ENCODE measurements at regions of chr1 and their contacts with region 1.

Region 1: DNA sequence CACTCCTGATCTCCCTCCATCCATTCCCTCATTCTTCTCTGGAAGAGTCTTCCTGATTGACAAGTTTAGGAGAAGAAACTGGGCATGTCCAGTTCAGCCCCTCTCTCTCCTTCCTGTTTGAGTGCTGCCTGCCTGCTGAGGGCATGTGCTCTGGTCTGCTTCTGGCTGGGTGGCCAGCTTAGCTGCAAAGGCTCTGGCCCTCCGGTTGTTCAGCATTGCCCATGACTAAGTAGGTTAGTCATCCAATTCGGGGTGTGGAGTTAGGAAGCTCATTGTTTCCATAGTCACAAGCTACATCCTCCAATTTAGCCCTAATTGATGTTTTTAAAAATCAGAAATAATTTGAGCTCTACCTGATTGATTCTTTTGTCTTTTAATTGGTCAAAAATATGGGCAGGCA is 25.6 kb upstream of the PLA2G2E start:
- DNase-seq: no peak

Region 2: DNA sequence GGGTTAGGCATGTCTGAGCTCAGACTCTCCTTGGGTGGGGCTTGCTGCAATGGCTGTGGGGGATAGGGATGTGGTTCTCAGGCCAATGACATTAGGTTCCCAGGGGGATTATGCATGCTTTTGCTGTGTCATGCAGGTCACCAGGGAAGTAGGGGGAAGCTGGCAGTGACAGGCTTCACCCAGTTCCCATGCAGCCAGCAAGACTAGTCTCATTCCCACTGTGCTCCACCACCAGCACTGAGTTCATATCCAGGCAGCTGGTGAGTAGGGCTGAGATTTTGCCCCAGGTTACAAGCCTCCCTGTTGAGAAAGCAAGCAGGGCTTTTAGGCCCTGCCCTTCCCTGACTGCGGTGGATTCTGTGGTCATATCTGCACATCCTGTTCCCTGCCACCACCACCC is 88.9 kb after region 1 on chr1:
- in situ Hi-C with region 1: loop called (anchors 25 kb)
- DNase-seq: no peak

Region 3: DNA sequence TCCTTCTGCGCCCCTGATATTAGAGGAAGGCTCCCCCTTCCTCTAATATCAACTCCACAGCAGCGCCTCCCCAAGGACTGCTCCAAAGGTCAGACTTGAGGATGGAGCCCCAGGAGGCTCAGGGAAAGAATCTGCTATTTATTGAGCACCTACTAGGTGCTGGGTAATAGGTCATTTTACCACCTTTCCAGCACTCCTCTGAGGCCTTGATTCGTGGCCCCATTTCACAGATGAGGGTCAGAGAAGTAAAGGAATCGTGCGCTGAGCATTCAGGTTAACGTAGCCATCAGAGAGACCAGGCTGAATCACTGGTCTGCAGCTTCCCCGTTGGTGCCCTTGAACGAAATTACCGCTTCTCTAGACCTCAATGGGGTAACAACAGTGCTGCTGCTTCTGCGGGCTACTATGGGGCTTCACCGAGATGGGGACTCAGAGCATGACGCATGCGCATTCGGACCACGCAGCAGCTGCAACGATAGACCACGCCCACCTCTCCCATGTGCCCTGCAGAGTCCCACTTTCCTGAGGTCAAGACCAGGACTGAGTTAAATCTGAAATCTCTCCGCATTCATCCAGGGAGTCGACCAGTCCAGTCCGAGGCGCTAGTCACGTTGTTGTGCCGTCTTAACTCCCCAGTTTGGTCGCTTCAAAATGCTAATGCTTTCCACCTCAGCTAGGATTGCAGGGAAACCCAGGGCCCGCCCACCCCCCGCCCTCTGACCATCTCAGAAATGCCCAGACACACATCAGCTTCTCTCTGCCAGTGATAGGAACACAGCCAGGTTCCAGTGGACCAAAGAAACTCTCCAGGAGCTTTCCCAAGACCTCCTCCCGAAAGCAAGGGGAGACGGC is 524.1 kb after region 1 on chr1:
- in situ Hi-C with region 1: loop called (anchors 25 kb)
- DNase-seq: no peak